Uterus (tissue), 4 donors: ENCODE measurements at regions of chr5 and their contacts with region 1.

Region 1: GRCh38 chr5:55601204-55601618 is 66.4 kb upstream of the PLPP1 start:
- DNase-seq: peak; percentile 83 to 90
- H3K4me3 ChIP-seq: no peak overlapping the region
- H3K27ac ChIP-seq: peak overlapping the region; percentile 89 to 93
- H3K4me1 ChIP-seq: peaks cover 5 to 36% of the 10 kb centered on the region in 2 donors
- H3K27me3 ChIP-seq: no peaks in the 10 kb centered on the region
- CTCF ChIP-seq: no peak
- POLR2A ChIP-seq: peak in 1 of 2 donors; percentile 12

Region 2: GRCh38 chr5:55534436-55535198 is 66.6 kb before region 1 on chr5 and contains the start of gene PLPP1:
- intact Hi-C with region 1: loop called (anchors 10 kb)
- DNase-seq: peak; percentile 92 to 95
- H3K4me3 ChIP-seq: peak within 1 kb of the TSS; percentile 69 to 72
- H3K27ac ChIP-seq: peak within 1 kb of the TSS; percentile 98
- H3K4me1 ChIP-seq: peaks cover 0 to 8% of the 10 kb centered on the region in 2 donors
- H3K27me3 ChIP-seq: no peaks in the 10 kb centered on the region
- CTCF ChIP-seq: peak in 1 of 4 experiments; percentile 3
- POLR2A ChIP-seq: peak; percentile 89 to 93
- total RNA-seq, gene PLPP1: 83.4 to 297 (median 175) TPM